ENCODE measurements at regions of chr16 and their contacts with region 1.

Region 1: GRCh38 chr16:10964039-10964890 is 19.9 kb downstream of the CLEC16A start:
- DNase-seq: no peak
- H3K4me3 ChIP-seq: peak overlapping the region in 2 of 4 donors; percentile 10 to 24
- H3K27ac ChIP-seq: peak overlapping the region; percentile 30 to 69 (median 60)
- H3K4me1 ChIP-seq: peaks cover 7 to 23% (median 14%) of the 10 kb centered on the region in 4 donors
- H3K27me3 ChIP-seq: no peaks in the 10 kb centered on the region
- CTCF ChIP-seq: peak; percentile 93 to 96 (median 94)
- EP300 ChIP-seq: no peak
- POLR2A ChIP-seq: no peak

Region 2: GRCh38 chr16:10765772-10766171 is 198.5 kb before region 1 on chr16:
- intact Hi-C with region 1: no loop called
- DNase-seq: no peak
- H3K4me3 ChIP-seq: no peak overlapping the region
- H3K27ac ChIP-seq: no peak overlapping the region
- H3K4me1 ChIP-seq: peaks cover 0 to 5% (median 0%) of the 10 kb centered on the region in 4 donors
- H3K27me3 ChIP-seq: no peaks in the 10 kb centered on the region
- CTCF ChIP-seq: no peak
- EP300 ChIP-seq: no peak
- POLR2A ChIP-seq: no peak

Region 3: GRCh38 chr16:11155284-11155806 is 191.1 kb after region 1 on chr16:
- intact Hi-C with region 1: loop called (anchors 5 kb)
- DNase-seq: no peak
- H3K4me3 ChIP-seq: no peak overlapping the region
- H3K27ac ChIP-seq: no peak overlapping the region
- H3K4me1 ChIP-seq: peaks cover 0 to 31% (median 24%) of the 10 kb centered on the region in 4 donors
- H3K27me3 ChIP-seq: no peaks in the 10 kb centered on the region
- CTCF ChIP-seq: no peak
- EP300 ChIP-seq: no peak
- POLR2A ChIP-seq: no peak

Region 4: GRCh38 chr16:11356573-11357331 is 392.5 kb after region 1 on chr16:
- intact Hi-C with region 1: loop called (anchors 5 kb)
- DNase-seq: no peak
- H3K4me3 ChIP-seq: no peak overlapping the region
- H3K27ac ChIP-seq: no peak overlapping the region
- H3K4me1 ChIP-seq: peaks cover 21 to 35% (median 32%) of the 10 kb centered on the region in 4 donors
- H3K27me3 ChIP-seq: no peaks in the 10 kb centered on the region
- CTCF ChIP-seq: peak; percentile 33 to 42 (median 39)
- EP300 ChIP-seq: no peak
- POLR2A ChIP-seq: no peak